HCT116 (cell line): ENCODE measurements at regions of chr3 and their contacts with region 1.

Region 1: GRCh38 chr3:22089284-22089683 is 338.3 kb upstream of the ZNF385D start:
- DNase-seq: no peak
- ATAC-seq: no peak
- H3K4me3 ChIP-seq: no peak overlapping the region
- H3K27ac ChIP-seq: no peak overlapping the region
- H3K4me1 ChIP-seq: no peaks in the 10 kb centered on the region
- H3K27me3 ChIP-seq: no peaks in the 10 kb centered on the region
- CTCF ChIP-seq: peak in 2 of 3 experiments; percentile 10 to 41; a peak in 3 of 6 replicates
- POLR2A ChIP-seq: no peak
- RAD21 ChIP-seq: peak; percentile 40

Region 2: DNA sequence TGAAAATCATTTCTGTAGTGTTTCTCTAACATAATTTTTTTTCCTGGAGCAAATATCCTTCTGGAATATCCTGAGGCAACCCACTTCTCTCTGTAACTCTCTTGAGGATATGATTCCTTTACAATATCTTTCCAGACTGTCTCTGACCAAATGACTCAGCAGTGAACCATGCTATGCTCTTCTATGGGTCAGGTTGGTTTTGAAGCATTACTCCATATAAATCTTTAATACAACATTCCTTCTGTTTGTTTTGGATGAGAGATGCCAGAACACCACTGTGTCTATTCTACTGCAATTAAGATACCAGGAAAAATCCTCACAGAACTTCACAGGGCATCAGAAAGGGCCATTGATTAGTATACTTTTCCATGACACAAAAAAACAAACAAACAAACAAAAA is 288.1 kb after region 1 on chr3:
- CTCF ChIA-PET with region 1: no interaction called
- POLR2A ChIA-PET with region 1: no interaction called
- RAD21 ChIA-PET with region 1: no interaction called
- intact Hi-C with region 1: no loop called
- DNase-seq: no peak
- ATAC-seq: no peak
- H3K4me3 ChIP-seq: no peak overlapping the region
- H3K27ac ChIP-seq: no peak overlapping the region
- H3K4me1 ChIP-seq: no peaks in the 10 kb centered on the region
- H3K27me3 ChIP-seq: no peaks in the 10 kb centered on the region
- CTCF ChIP-seq: no peak
- POLR2A ChIP-seq: no peak
- RAD21 ChIP-seq: no peak

Region 3: DNA sequence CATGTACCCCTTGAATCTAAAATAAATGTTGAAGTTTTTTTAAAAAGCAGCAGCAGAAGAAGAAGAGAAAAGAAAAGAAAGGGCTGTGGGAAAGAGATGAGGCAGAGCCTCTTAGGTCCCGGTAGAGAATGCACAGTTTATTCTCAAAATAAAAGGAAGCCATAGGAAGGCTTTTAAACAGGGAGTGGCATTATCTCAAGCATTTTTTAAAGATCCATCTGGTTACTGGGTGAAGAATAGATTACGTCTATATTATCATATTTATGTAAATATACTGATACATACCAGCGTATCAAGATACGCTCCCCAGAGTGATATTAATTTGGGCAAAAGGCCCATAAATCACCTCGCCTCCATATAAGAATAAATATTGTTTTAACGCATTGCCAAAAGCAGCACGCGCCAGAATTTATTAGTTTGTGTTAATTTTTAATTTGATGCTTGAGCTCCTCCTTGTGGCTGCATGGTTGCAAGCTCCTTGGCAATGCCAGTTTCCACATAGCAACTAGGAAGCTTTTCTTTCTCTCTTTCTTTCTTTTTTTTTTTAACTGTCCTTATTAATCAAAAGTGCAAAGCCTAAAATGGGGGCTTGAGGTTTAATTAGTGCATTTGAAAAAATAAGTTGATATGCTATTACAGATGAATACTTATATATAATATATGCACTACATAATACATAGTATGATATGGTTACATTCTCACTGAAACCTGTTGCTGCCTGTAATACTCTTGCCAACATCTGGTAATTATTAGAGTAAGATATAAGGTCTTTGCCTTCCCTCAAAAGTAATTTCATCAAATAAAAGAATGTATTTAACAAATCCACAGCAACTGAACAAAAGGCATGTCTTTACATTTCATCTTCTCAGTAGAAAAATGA is 871.1 kb after region 1 on chr3:
- CTCF ChIA-PET with region 1: no interaction called
- POLR2A ChIA-PET with region 1: no interaction called
- RAD21 ChIA-PET with region 1: no interaction called
- intact Hi-C with region 1: loop called (anchors 5 kb)
- DNase-seq: peak; percentile 16
- ATAC-seq: peak; percentile 59; the same call in 1 of the 2 replicates
- H3K4me3 ChIP-seq: no peak overlapping the region
- H3K27ac ChIP-seq: no peak overlapping the region
- H3K4me1 ChIP-seq: no peaks in the 10 kb centered on the region
- H3K27me3 ChIP-seq: peaks cover 10% of the 10 kb centered on the region
- CTCF ChIP-seq: peak; percentile 41 to 69 (median 68); a peak in 5 of 6 replicates
- POLR2A ChIP-seq: no peak
- RAD21 ChIP-seq: peak; percentile 63